ENCODE measurements at regions of chr6 and their contacts with region 1.

Region 1: GRCh38 chr6:11144393-11144851 is 32.9 kb upstream of the ERVFRD-1 start:
- DNase-seq: peak; percentile 89
- ATAC-seq: peak; percentile 94
- H3K4me3 Mint-ChIP-seq: no peak overlapping the region
- H3K27ac Mint-ChIP-seq: no peak overlapping the region
- H3K4me1 Mint-ChIP-seq: peaks cover 7% of the 10 kb centered on the region
- H3K27me3 Mint-ChIP-seq: no peaks in the 10 kb centered on the region

Region 2: GRCh38 chr6:11055127-11055627 is 89.2 kb before region 1 on chr6:
- CTCF ChIA-PET with region 1: no interaction called
- POLR2A ChIA-PET with region 1: no interaction called
- intact Hi-C with region 1: no loop called
- DNase-seq: no peak
- ATAC-seq: no peak
- H3K4me3 Mint-ChIP-seq: no peak overlapping the region
- H3K27ac Mint-ChIP-seq: no peak overlapping the region
- H3K4me1 Mint-ChIP-seq: no peaks in the 10 kb centered on the region
- H3K27me3 Mint-ChIP-seq: peaks cover 17% of the 10 kb centered on the region

Region 3: GRCh38 chr6:11194356-11195218 is 50.2 kb after region 1 on chr6:
- CTCF ChIA-PET with region 1: no interaction called
- POLR2A ChIA-PET with region 1: no interaction called
- intact Hi-C with region 1: no loop called
- DNase-seq: no peak
- ATAC-seq: no peak
- H3K4me3 Mint-ChIP-seq: no peak overlapping the region
- H3K27ac Mint-ChIP-seq: no peak overlapping the region
- H3K4me1 Mint-ChIP-seq: peaks cover 14% of the 10 kb centered on the region
- H3K27me3 Mint-ChIP-seq: no peaks in the 10 kb centered on the region

Region 4: DNA sequence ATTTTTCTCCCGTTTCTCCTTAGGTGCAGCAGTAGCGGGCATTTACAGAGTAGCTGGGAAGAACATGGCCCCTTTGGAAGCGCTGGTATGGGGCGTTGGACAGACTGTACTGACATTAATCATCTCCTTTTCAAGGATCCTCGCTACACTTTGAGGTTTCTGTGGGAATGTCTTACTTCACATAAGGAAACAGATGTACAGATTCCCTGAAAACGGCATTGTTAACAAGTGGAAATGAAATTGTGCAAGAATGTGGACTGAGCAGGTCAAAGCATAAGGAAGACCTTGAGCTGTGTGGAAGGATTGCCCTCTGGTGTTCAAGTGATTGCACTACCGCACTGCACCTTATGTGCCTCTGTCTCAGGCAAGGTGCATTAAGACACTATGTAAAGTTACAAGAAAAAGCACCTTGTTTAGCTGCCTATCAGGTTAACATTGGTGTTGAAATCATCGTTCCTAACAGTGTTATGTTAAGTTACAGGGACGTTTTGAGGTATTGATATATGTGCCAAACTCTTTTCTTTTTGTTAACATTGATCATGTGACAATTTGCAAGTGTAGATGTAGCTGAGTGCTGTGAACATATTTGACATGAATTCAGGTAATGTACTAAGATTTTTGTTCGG is 431.1 kb after region 1 on chr6:
- CTCF ChIA-PET with region 1: interaction called, 6 read pairs
- POLR2A ChIA-PET with region 1: no interaction called
- intact Hi-C with region 1: loop called (anchors 1 kb)
- DNase-seq: peak; percentile 67
- ATAC-seq: peak; percentile 98
- H3K4me3 Mint-ChIP-seq: no peak overlapping the region
- H3K27ac Mint-ChIP-seq: no peak overlapping the region
- H3K4me1 Mint-ChIP-seq: no peaks in the 10 kb centered on the region
- H3K27me3 Mint-ChIP-seq: no peaks in the 10 kb centered on the region

Measured in activated CD4-positive, alpha-beta T cell treated with anti-CD3 and anti-CD28 coated beads for 36 hours (primary cell).